Activated CD4-positive, alpha-beta T cell treated with anti-CD3 and anti-CD28 coated beads, Interleukin-2, amount 10 ng/mL, durations not matched to agents 24 days and 14 days (primary cell): ENCODE measurements at regions of chr6 and their contacts with region 1.

Region 1: GRCh38 chr6:35601331-35602132 is 87.2 kb downstream of the FKBP5 start:
- DNase-seq: peak; percentile 91
- H3K4me3 Mint-ChIP-seq: peak overlapping the region; percentile 80
- H3K27ac Mint-ChIP-seq: peak overlapping the region; percentile 94
- H3K4me1 Mint-ChIP-seq: peaks cover 59% of the 10 kb centered on the region
- H3K27me3 Mint-ChIP-seq: no peaks in the 10 kb centered on the region

Region 2: DNA sequence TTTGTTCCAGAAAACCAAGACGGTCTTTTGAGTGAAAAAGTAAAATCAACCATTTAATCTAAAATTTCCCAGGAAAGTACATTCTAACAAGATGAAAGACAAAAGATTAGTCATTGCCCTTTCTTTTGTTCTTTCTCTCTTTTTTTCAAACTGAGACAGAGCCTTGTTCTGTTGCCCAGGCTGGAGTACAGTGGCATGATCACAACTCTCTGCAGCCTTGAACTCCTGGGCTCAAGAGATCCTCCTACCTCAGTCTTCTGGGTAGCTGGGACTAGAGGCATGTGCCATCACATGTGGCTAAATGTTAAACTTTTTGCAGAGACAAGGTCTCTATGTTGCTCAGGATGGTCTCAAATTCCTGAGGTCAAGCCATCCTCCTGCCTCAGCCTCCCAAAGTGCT is 12.2 kb after region 1 on chr6:
- intact Hi-C with region 1: loop called (anchors 2 kb)
- DNase-seq: no peak
- H3K4me3 Mint-ChIP-seq: no peak overlapping the region
- H3K27ac Mint-ChIP-seq: peak overlapping the region; percentile 45
- H3K4me1 Mint-ChIP-seq: peaks cover 34% of the 10 kb centered on the region
- H3K27me3 Mint-ChIP-seq: no peaks in the 10 kb centered on the region

Region 3: GRCh38 chr6:35640017-35640664 is 38.6 kb after region 1 on chr6:
- intact Hi-C with region 1: loop called (anchors 5 kb)
- DNase-seq: peak; percentile 48
- H3K4me3 Mint-ChIP-seq: no peak overlapping the region
- H3K27ac Mint-ChIP-seq: no peak overlapping the region
- H3K4me1 Mint-ChIP-seq: peaks cover 42% of the 10 kb centered on the region
- H3K27me3 Mint-ChIP-seq: no peaks in the 10 kb centered on the region

Region 4: DNA sequence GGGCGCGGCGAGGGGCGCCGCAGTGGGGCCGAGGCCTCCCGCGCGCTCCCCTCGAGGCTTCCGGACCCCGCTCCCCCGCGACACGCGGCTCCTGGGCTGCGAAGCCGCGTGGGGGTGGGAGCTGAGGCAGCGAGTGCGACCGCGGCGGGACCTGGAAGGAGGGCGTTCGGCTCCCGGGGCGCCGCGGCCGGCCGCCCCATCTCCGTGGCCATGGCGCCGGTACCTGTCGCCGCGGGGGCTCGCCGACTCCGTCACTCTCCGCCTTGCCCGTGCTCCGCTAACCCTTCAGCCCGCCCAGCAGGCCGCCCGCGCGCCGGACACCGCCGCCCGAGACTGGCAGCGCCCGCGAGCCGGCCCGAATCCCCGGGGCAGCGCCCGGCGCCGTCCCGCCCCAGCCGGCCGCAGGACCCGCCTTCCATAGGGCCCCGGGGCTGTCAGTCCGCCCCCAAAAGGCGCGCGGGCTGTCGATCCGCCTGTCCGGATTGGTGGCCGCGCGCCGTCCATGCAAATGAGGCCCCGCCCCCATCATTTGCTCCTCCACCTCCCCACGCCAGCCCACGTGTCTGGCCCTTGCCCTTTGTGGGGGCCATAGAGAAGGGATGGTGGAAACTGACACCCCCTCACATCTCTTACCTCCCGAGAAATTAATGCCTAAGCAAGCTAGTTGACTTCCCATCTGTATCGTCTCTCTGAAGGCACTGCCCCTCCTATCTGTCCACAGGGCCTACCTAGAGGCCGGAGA is 87.2 kb after region 1 on chr6 and contains the start of gene FKBP5:
- intact Hi-C with region 1: loop called (anchors 5 kb)
- DNase-seq: peak; percentile 97
- H3K4me3 Mint-ChIP-seq: peak within 1 kb of the TSS; percentile 93
- H3K27ac Mint-ChIP-seq: peak within 1 kb of the TSS; percentile 92
- H3K4me1 Mint-ChIP-seq: peaks cover 15% of the 10 kb centered on the region
- H3K27me3 Mint-ChIP-seq: no peaks in the 10 kb centered on the region
- total RNA-seq, gene FKBP5: 85.0 and 85.1 TPM in 2 replicates

Region 5: GRCh38 chr6:35731736-35732532 is 130.4 kb after region 1 on chr6:
- intact Hi-C with region 1: loop called (anchors 5 kb)
- DNase-seq: peak; percentile 98
- H3K4me3 Mint-ChIP-seq: peak overlapping the region; percentile 90
- H3K27ac Mint-ChIP-seq: peak overlapping the region; percentile 94
- H3K4me1 Mint-ChIP-seq: peaks cover 56% of the 10 kb centered on the region
- H3K27me3 Mint-ChIP-seq: no peaks in the 10 kb centered on the region

Region 6: DNA sequence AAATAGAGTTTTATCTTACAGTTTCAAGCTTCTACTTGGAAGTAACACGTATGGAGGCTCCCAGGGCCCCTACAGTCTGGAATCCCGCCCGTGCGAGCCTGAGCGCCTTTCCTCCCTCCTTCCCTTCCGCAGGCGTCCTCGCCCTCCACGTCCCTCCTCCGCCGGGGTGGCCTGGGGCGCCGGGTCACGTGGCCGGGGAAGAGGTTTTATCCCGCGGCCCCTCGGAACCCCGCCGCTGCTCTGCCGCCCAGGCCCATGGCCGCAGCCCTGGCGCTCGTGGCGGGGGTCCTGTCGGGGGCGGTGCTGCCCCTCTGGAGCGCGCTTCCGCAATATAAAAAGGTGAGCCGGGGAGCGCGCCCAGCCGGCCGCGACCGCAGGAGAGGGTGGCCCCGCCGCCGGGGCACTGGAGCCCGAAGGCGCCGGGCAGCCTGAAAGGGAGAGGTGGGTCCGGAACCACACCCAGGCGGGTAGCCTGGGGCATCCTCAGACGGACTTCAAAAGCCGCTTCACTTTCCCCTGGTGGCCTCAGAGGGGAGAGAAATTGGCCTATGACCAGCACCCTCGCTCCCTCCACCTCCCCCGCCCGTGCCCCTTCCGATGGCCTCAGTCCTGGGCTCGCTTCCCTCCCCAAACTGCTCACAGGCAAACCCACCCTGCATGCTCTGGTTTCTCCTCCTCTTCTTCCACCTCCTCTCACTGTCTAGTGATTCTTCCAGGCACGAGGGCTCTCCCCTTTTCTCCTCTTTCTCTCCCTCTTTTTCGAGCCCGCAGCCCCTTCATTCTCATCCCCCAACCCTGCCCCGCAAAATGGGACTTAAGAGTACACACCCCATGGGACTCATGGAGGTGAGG is 175.1 kb after region 1 on chr6 and contains the start of gene CLPSL2:
- intact Hi-C with region 1: no loop called
- DNase-seq: peak; percentile 61
- H3K4me3 Mint-ChIP-seq: peak within 1 kb of the TSS; percentile 69
- H3K27ac Mint-ChIP-seq: no peak within 1 kb of the TSS
- H3K4me1 Mint-ChIP-seq: peaks cover 3% of the 10 kb centered on the region
- H3K27me3 Mint-ChIP-seq: peaks cover 37% of the 10 kb centered on the region
- total RNA-seq, gene CLPSL2: not detected in 2 replicates